ENCODE measurements at regions of chr2 and their contacts with region 1.

Region 1: DNA sequence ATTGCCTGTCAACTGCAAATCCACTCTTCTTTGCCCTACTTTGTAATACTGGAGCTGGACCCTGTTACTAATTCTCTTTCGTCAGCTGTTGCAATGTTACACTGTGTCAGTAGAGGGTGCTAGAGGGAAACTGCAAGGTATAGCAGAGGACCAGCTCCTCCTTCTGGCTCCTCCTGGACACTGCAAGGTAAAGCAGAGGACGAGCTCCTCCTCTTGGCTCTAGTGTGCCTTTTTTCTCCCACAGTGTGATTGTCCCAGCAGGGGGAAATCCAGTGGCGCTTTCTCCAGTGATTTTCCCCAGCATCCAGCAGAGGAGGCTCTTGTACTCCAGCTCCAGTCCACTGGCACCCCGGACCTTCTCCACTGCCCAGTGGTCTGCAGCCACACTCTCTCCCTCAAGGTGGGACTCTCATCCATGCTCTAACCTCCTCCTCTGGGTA is 95.6 kb downstream of the CAPN13 start:
- DNase-seq: peak; percentile 50 to 89 (median 86)
- ATAC-seq: peak; percentile 96
- H3K4me3 ChIP-seq: no peak overlapping the region
- H3K4me3 Mint-ChIP-seq: no peak overlapping the region
- H3K27ac ChIP-seq: no peak overlapping the region
- H3K27ac Mint-ChIP-seq: peak overlapping the region in 1 of 9 donors; percentile 8
- H3K4me1 ChIP-seq: no peaks in the 10 kb centered on the region
- H3K4me1 Mint-ChIP-seq: peaks cover 0 to 8% (median 5%) of the 10 kb centered on the region in 7 donors
- H3K27me3 ChIP-seq: no peaks in the 10 kb centered on the region
- H3K27me3 Mint-ChIP-seq: peaks cover 0 to 4% (median 0%) of the 10 kb centered on the region in 5 donors

Region 2: GRCh38 chr2:29923110-29923721 is 788.5 kb before region 1 on chr2:
- CTCF ChIA-PET with region 1: no interaction called
- POLR2A ChIA-PET with region 1: no interaction called
- intact Hi-C with region 1: loop called in 1 of 2 experiments (anchors 5 kb)
- DNase-seq: peak in 4 of 9 donors; percentile 12 to 27 (median 20)
- ATAC-seq: no peak
- H3K4me3 ChIP-seq: no peak overlapping the region
- H3K4me3 Mint-ChIP-seq: peak overlapping the region in 1 of 10 donors; percentile 42
- H3K27ac ChIP-seq: no peak overlapping the region
- H3K27ac Mint-ChIP-seq: no peak overlapping the region
- H3K4me1 ChIP-seq: peaks cover 0 to 11% of the 10 kb centered on the region in 2 donors
- H3K4me1 Mint-ChIP-seq: peaks cover 0 to 28% (median 19%) of the 10 kb centered on the region in 7 donors
- H3K27me3 ChIP-seq: peaks cover 10 to 29% of the 10 kb centered on the region in 2 donors
- H3K27me3 Mint-ChIP-seq: peaks cover 46 to 59% (median 49%) of the 10 kb centered on the region in 5 donors

Region 3: GRCh38 chr2:30165050-30165520 is 546.6 kb before region 1 on chr2:
- CTCF ChIA-PET with region 1: interaction called, 379 read pairs
- POLR2A ChIA-PET with region 1: interaction called, 15 read pairs
- intact Hi-C with region 1: loop called (anchors 1 kb)
- DNase-seq: peak in 8 of 9 donors; percentile 41 to 89 (median 84)
- ATAC-seq: peak; percentile 75
- H3K4me3 ChIP-seq: no peak overlapping the region
- H3K4me3 Mint-ChIP-seq: peak overlapping the region in 1 of 10 donors; percentile 37
- H3K27ac ChIP-seq: no peak overlapping the region
- H3K27ac Mint-ChIP-seq: peak overlapping the region in 4 of 9 donors; percentile 19 to 76 (median 50)
- H3K4me1 ChIP-seq: peaks cover 0 to 5% of the 10 kb centered on the region in 2 donors
- H3K4me1 Mint-ChIP-seq: peaks cover 3 to 12% (median 6%) of the 10 kb centered on the region in 7 donors
- H3K27me3 ChIP-seq: no peaks in the 10 kb centered on the region
- H3K27me3 Mint-ChIP-seq: no peaks in the 10 kb centered on the region

Region 4: DNA sequence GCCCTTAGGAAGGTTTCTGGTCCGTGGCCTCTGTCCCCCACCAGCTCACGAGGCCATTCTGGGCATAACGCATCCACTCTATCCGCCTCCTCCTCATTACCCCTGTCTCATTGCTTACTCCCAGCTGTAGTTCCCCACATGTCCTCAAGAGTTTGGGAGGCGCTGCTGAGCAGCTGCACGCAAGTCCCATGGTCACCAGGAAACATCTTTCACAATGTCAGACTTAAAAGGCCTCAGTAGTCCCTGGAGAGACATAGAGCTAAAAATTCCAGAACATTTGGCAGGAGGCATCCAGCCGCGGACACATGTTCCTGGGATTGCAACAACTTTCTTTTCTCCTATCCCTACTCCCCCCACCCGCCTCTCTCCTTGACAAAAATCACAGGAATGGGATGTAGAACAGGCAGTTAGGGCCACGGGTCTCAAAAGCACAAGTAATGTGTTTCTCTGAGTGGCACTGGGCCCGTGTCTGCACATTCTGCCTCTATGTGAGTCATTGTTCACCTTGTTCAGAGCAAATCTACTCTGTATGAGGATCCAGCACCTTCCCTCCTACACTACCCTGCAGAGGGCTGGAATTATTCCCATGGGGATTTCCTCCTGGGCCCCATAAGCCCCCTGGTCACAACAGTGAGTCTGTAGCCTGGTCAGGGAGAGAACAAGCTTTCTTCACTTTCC is 472.2 kb before region 1 on chr2:
- CTCF ChIA-PET with region 1: interaction called, 10 read pairs
- POLR2A ChIA-PET with region 1: no interaction called
- intact Hi-C with region 1: loop called in 1 of 2 experiments (anchors 10 kb)
- DNase-seq: peak; percentile 55 to 79 (median 74)
- ATAC-seq: peak; percentile 88
- H3K4me3 ChIP-seq: peak overlapping the region; percentile 45
- H3K4me3 Mint-ChIP-seq: peak overlapping the region; percentile 65 to 98 (median 92)
- H3K27ac ChIP-seq: peak overlapping the region; percentile 97
- H3K27ac Mint-ChIP-seq: peak overlapping the region; percentile 61 to 100 (median 90)
- H3K4me1 ChIP-seq: peaks cover 75 to 87% of the 10 kb centered on the region in 2 donors
- H3K4me1 Mint-ChIP-seq: peaks cover 68 to 97% (median 89%) of the 10 kb centered on the region in 7 donors
- H3K27me3 ChIP-seq: no peaks in the 10 kb centered on the region
- H3K27me3 Mint-ChIP-seq: no peaks in the 10 kb centered on the region

Region 5: DNA sequence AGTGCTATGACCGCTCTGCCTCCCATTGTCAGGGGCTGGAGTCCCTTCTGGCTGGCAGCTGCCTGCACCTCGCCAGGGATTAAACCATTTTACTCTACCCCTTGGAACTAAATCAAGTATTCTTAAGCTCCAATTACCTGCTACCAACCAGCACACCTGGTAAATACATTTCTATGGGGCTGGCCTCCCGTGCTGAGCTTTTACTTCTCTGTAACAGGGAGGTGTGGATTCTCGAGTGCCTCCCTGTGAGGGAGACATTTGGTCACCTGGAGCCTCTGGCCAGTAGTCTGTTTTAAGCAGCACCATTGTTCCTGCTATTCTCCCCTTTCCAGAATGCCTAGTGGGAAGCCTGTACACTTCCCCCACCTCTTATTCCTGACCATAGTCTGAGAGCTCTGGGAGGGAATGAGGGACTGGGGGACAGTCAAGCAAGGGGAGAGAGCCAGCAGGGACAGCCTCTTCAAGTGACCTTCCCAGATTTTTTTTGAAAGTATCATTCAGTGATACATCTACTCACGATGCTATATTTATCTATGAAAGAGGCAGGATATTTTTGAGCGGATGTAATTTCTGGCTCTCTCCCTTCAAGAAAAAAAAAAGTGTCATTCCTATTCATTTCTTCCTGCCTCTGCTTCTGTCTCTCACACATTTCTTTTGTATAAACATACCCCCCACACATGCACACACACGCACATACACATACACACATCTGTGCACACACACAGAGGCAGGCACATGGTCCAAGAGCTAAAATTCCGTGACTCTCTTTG is 17.2 kb before region 1 on chr2:
- CTCF ChIA-PET with region 1: interaction called, 19 read pairs
- POLR2A ChIA-PET with region 1: no interaction called
- intact Hi-C with region 1: no loop called
- DNase-seq: peak in 1 of 9 donors; percentile 7
- ATAC-seq: no peak
- H3K4me3 ChIP-seq: no peak overlapping the region
- H3K4me3 Mint-ChIP-seq: no peak overlapping the region
- H3K27ac ChIP-seq: no peak overlapping the region
- H3K27ac Mint-ChIP-seq: peak overlapping the region in 1 of 9 donors; percentile 40
- H3K4me1 ChIP-seq: no peaks in the 10 kb centered on the region
- H3K4me1 Mint-ChIP-seq: peaks cover 0 to 2% (median 0%) of the 10 kb centered on the region in 7 donors
- H3K27me3 ChIP-seq: no peaks in the 10 kb centered on the region
- H3K27me3 Mint-ChIP-seq: peaks cover 0 to 11% (median 9%) of the 10 kb centered on the region in 5 donors

Region 6: DNA sequence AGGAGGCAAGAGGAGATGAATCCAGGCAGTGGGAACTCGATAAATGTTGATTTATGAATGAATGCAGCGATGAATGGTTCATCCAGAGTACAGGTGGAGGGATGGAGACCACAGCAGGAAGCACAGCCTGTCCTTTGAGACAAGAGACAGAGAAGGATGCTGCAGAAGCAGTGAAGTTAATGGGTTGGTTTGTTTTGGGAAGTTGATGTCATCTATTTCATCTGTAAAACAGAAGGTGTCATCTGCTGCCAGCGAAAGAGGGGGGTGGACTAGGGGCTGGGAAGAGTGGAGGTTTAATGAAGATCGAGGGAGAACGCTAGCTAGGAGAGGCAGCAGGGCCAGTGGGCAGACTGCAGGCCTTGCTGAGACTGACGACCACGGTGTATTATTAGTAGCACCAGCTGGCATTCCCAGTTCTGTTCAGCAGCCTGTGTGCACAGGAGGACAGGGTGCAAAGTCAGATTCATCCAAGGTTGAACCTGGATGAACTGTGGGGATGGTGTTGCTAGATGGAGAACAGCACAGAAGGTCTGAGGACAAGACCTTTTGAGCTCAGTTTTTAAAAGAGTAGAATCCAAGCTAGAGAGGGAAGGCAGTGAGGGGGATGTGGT is 215.9 kb after region 1 on chr2:
- CTCF ChIA-PET with region 1: no interaction called
- POLR2A ChIA-PET with region 1: no interaction called
- intact Hi-C with region 1: no loop called
- DNase-seq: no peak
- ATAC-seq: no peak
- H3K4me3 ChIP-seq: no peak overlapping the region
- H3K4me3 Mint-ChIP-seq: no peak overlapping the region
- H3K27ac ChIP-seq: no peak overlapping the region
- H3K27ac Mint-ChIP-seq: no peak overlapping the region
- H3K4me1 ChIP-seq: no peaks in the 10 kb centered on the region
- H3K4me1 Mint-ChIP-seq: no peaks in the 10 kb centered on the region
- H3K27me3 ChIP-seq: no peaks in the 10 kb centered on the region
- H3K27me3 Mint-ChIP-seq: no peaks in the 10 kb centered on the region

Region 7: DNA sequence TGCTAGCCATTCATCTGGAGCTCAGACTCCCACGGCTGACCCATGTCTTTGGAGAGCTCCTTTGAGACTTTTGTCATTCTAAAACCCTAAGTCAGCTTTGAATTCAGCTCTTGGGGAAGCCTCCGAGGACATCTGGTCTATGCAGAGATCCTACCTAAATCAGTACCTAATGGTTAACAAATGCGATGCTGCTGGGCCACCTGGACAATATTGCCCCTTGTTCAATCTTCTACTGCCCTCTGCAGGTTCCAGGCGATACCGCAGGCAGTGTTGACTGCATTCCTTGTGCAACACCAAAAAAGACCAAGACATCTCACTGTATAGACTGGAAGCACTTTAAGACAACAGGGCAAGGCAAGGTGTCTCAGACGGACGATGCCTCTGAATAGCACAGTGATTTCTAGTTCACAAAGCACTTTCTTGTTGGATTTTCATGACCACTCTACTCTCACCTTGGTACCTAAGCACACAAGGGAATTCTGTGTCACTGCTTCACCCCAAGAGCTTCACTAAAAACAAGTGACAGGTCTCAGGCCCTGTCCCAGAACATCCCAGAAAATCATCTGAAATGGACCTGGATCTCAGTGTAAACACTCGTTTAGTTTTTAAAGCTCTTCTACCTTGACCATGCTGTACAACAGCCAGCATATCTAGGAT is 622.0 kb after region 1 on chr2:
- CTCF ChIA-PET with region 1: interaction called, 29 read pairs
- POLR2A ChIA-PET with region 1: no interaction called
- intact Hi-C with region 1: loop called (anchors 1 kb)
- DNase-seq: peak; percentile 31 to 74 (median 67)
- ATAC-seq: peak; percentile 81
- H3K4me3 ChIP-seq: no peak overlapping the region
- H3K4me3 Mint-ChIP-seq: no peak overlapping the region
- H3K27ac ChIP-seq: no peak overlapping the region
- H3K27ac Mint-ChIP-seq: no peak overlapping the region
- H3K4me1 ChIP-seq: no peaks in the 10 kb centered on the region
- H3K4me1 Mint-ChIP-seq: no peaks in the 10 kb centered on the region
- H3K27me3 ChIP-seq: no peaks in the 10 kb centered on the region
- H3K27me3 Mint-ChIP-seq: peaks cover 0 to 26% (median 5%) of the 10 kb centered on the region in 5 donors

Region 8: GRCh38 chr2:32063310-32064161 is 1351.9 kb after region 1 on chr2 and contains the start of gene SPAST:
- CTCF ChIA-PET with region 1: no interaction called
- POLR2A ChIA-PET with region 1: no interaction called
- intact Hi-C with region 1: loop called in 1 of 2 experiments (anchors 5 kb)
- DNase-seq: peak; percentile 92 to 97 (median 95)
- ATAC-seq: peak; percentile 93
- H3K4me3 ChIP-seq: peak within 1 kb of the TSS; percentile 99
- H3K4me3 Mint-ChIP-seq: peak within 1 kb of the TSS; percentile 91 to 100 (median 98)
- H3K27ac ChIP-seq: peak within 1 kb of the TSS; percentile 88
- H3K27ac Mint-ChIP-seq: peak within 1 kb of the TSS; percentile 88 to 97 (median 92)
- H3K4me1 ChIP-seq: peaks cover 5 to 15% of the 10 kb centered on the region in 2 donors
- H3K4me1 Mint-ChIP-seq: peaks cover 22 to 46% (median 37%) of the 10 kb centered on the region in 7 donors
- H3K27me3 ChIP-seq: no peaks in the 10 kb centered on the region
- H3K27me3 Mint-ChIP-seq: peaks cover 0 to 1% (median 0%) of the 10 kb centered on the region in 5 donors
- total RNA-seq, gene SPAST: 16.3 to 21.0 (median 20.3) TPM